ENCODE measurements at regions of chr10 and their contacts with region 1.

Region 1: GRCh38 chr10:15898046-15898445 is 37.7 kb upstream of the MINDY3 start:
- DNase-seq: no peak
- ATAC-seq: no peak
- H3K4me3 ChIP-seq: no peak overlapping the region
- H3K27ac ChIP-seq: no peak overlapping the region
- H3K4me1 ChIP-seq: no peaks in the 10 kb centered on the region
- H3K27me3 ChIP-seq: peaks cover 0 to 27% (median 14%) of the 10 kb centered on the region in 7 donors
- CTCF ChIP-seq: peak in 4 of 9 donors; percentile 7 to 30 (median 20)

Region 2: DNA sequence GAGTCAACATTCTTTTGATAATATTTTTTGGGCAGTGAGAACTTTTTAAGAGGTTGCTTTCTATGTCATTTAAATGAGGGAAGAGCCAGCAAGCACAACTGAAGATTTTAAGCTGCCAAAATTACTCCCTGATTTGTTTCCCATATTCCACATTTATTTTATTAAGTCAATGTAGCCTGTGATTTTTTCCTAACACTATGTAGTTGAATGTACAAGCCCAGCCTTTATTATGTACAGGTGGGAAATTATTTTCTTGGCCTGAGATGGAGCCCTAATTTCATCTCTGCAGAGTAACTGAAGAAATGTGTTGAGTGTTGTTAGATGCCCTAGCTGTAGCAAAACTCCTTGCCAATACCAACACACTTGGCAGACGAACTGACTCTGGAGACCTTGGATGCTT is 45.4 kb after region 1 on chr10:
- intact Hi-C with region 1: no loop called
- DNase-seq: no peak
- ATAC-seq: no peak
- H3K4me3 ChIP-seq: no peak overlapping the region
- H3K27ac ChIP-seq: no peak overlapping the region
- H3K4me1 ChIP-seq: no peaks in the 10 kb centered on the region
- H3K27me3 ChIP-seq: peaks cover 0 to 11% (median 0%) of the 10 kb centered on the region in 7 donors
- CTCF ChIP-seq: no peak

Region 3: DNA sequence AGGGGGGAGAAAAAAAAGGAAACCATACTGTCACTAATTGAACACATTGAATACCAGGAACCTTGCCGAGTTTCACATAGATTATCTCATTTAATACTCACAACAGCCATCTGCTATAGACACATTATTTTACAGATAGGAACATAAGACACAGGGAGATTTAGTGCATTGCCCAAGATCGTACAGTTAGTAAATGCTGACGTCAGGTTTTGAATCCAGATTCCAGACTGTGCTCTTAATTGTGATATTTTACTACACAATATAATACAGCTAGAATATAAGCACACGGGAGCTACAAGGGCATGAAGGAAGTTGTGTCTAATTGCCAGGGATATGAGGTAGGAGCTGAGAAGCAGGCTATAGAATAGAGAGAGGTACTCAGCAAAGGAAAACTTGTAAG is 56.1 kb after region 1 on chr10:
- intact Hi-C with region 1: loop called in 1 of 10 experiments (anchors 10 kb)
- DNase-seq: no peak
- ATAC-seq: no peak
- H3K4me3 ChIP-seq: no peak overlapping the region
- H3K27ac ChIP-seq: no peak overlapping the region
- H3K4me1 ChIP-seq: no peaks in the 10 kb centered on the region
- H3K27me3 ChIP-seq: peaks cover 0 to 5% (median 0%) of the 10 kb centered on the region in 7 donors
- CTCF ChIP-seq: no peak

Region 4: GRCh38 chr10:16777473-16778370 is 879.7 kb after region 1 on chr10:
- intact Hi-C with region 1: loop called in 8 of 10 experiments (anchors 5 to 10 kb)
- DNase-seq: peak in 1 of 2 donors; percentile 69
- ATAC-seq: peak; percentile 78 to 94 (median 88)
- H3K4me3 ChIP-seq: peak overlapping the region in 1 of 10 donors; percentile 5
- H3K27ac ChIP-seq: peak overlapping the region in 8 of 10 donors; percentile 23 to 66 (median 32)
- H3K4me1 ChIP-seq: peaks cover 0 to 39% (median 25%) of the 10 kb centered on the region in 9 donors
- H3K27me3 ChIP-seq: no peaks in the 10 kb centered on the region
- CTCF ChIP-seq: peak; percentile 60 to 86 (median 82)

Region 5: GRCh38 chr10:16809074-16809718 is 911.1 kb after region 1 on chr10:
- intact Hi-C with region 1: loop called in 3 of 10 experiments (anchors 10 kb)
- DNase-seq: peak; percentile 28 to 58
- ATAC-seq: peak in 7 of 8 donors; percentile 49 to 80 (median 64)
- H3K4me3 ChIP-seq: no peak overlapping the region
- H3K27ac ChIP-seq: no peak overlapping the region
- H3K4me1 ChIP-seq: peaks cover 0 to 39% (median 11%) of the 10 kb centered on the region in 9 donors
- H3K27me3 ChIP-seq: no peaks in the 10 kb centered on the region
- CTCF ChIP-seq: peak; percentile 34 to 77 (median 66)